ENCODE measurements at regions of chr16 and their contacts with region 1.

Region 1: DNA sequence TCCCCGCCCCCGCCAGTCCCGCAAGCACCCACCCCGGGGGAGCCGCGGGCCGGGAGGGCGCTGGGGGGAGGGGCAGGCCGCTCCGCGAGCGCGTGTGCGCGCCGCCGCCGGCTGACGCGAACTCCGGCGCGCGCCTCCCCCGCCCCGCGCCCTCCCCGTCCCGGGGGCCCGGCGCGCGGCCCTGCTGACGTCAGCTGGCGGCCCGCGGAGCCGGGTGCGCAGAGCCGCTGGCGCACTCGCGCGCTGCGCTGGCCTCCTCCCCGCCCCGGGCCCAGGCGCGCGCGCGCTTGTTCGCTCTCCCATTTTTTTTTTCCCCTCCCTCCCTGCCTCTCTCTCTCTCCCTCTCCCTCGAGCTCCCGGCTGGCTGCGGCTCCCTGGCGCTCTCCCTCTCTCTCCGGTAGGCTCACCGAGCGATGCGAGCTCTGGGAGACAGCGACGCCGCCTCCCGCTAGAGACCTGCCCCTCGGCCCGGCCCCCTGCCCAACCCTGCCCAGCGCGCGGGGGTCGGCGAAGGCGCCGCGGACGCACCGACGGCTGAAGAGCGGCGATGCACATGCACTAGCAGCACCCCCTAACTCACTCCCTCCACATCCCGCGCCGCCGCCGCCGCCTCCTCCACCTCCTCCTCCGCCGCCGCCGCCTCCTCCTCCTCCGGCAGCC is at the start of gene GNAO1:
- DNase-seq: peak; percentile 59
- ATAC-seq: peak; percentile 81
- H3K4me3 Mint-ChIP-seq: peak within 1 kb of the TSS; percentile 83
- H3K27ac Mint-ChIP-seq: no peak within 1 kb of the TSS
- H3K4me1 Mint-ChIP-seq: peaks cover 31% of the 10 kb centered on the region
- H3K27me3 Mint-ChIP-seq: peaks cover 35% of the 10 kb centered on the region
- CTCF ChIP-seq: no peak
- total RNA-seq, gene GNAO1: 0.53 and 0.78 TPM in 2 replicates

Region 2: GRCh38 chr16:54936979-54937670 is 1254.2 kb before region 1 on chr16:
- CTCF ChIA-PET with region 1: no interaction called
- POLR2A ChIA-PET with region 1: no interaction called
- intact Hi-C with region 1: loop called (anchors 5 kb)
- DNase-seq: no peak
- ATAC-seq: no peak
- H3K4me3 Mint-ChIP-seq: peak overlapping the region; percentile 15
- H3K27ac Mint-ChIP-seq: no peak overlapping the region
- H3K4me1 Mint-ChIP-seq: peaks cover 20% of the 10 kb centered on the region
- H3K27me3 Mint-ChIP-seq: peaks cover 74% of the 10 kb centered on the region
- CTCF ChIP-seq: no peak

Region 3: GRCh38 chr16:56121156-56121500 is 70.2 kb before region 1 on chr16:
- CTCF ChIA-PET with region 1: no interaction called
- POLR2A ChIA-PET with region 1: no interaction called
- intact Hi-C with region 1: loop called (anchors 5 kb)
- DNase-seq: no peak
- ATAC-seq: peak; percentile 82
- H3K4me3 Mint-ChIP-seq: no peak overlapping the region
- H3K27ac Mint-ChIP-seq: peak overlapping the region; percentile 19
- H3K4me1 Mint-ChIP-seq: peaks cover 32% of the 10 kb centered on the region
- H3K27me3 Mint-ChIP-seq: peaks cover 10% of the 10 kb centered on the region
- CTCF ChIP-seq: no peak

Region 4: DNA sequence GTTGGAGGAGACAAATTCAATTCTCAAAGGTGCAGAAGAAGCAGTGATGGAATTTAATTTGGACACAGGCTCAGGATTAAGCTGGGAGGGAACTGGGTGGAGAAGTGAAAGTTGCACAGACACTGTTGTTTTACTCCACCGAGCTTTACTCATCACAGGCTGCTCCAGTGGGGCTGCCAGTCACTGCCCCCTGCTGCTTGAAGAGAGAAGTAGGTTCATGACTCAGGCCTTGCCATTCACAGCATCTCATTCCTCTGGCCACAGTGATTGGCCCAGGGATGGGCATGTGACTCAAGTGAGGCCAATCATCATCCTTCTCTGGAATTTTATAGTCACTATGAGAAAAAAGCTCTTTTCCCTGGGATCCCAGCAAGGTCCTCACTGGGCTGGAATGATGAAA is 11.8 kb after region 1 on chr16:
- CTCF ChIA-PET with region 1: interaction called, 7 read pairs
- POLR2A ChIA-PET with region 1: interaction called, 4 read pairs
- intact Hi-C with region 1: loop called (anchors 1 kb)
- DNase-seq: no peak
- ATAC-seq: peak; percentile 92
- H3K4me3 Mint-ChIP-seq: no peak overlapping the region
- H3K27ac Mint-ChIP-seq: no peak overlapping the region
- H3K4me1 Mint-ChIP-seq: peaks cover 25% of the 10 kb centered on the region
- H3K27me3 Mint-ChIP-seq: no peaks in the 10 kb centered on the region
- CTCF ChIP-seq: no peak

Region 5: GRCh38 chr16:56425439-56425832 is 234.2 kb after region 1 on chr16 and contains the start of gene AMFR:
- CTCF ChIA-PET with region 1: no interaction called
- POLR2A ChIA-PET with region 1: no interaction called
- intact Hi-C with region 1: loop called (anchors 10 kb)
- DNase-seq: peak; percentile 82
- ATAC-seq: peak; percentile 87
- H3K4me3 Mint-ChIP-seq: peak within 1 kb of the TSS; percentile 96
- H3K27ac Mint-ChIP-seq: peak within 1 kb of the TSS; percentile 95
- H3K4me1 Mint-ChIP-seq: peaks cover 44% of the 10 kb centered on the region
- H3K27me3 Mint-ChIP-seq: no peaks in the 10 kb centered on the region
- CTCF ChIP-seq: no peak
- total RNA-seq, gene AMFR: 118 and 134 TPM in 2 replicates

Region 6: GRCh38 chr16:57984331-57985203 is 1793.3 kb after region 1 on chr16:
- CTCF ChIA-PET with region 1: no interaction called
- POLR2A ChIA-PET with region 1: no interaction called
- intact Hi-C with region 1: loop called (anchors 5 kb)
- DNase-seq: peak; percentile 82
- ATAC-seq: peak; percentile 99
- H3K4me3 Mint-ChIP-seq: peak overlapping the region; percentile 91
- H3K27ac Mint-ChIP-seq: no peak overlapping the region
- H3K4me1 Mint-ChIP-seq: peaks cover 14% of the 10 kb centered on the region
- H3K27me3 Mint-ChIP-seq: peaks cover 4% of the 10 kb centered on the region
- CTCF ChIP-seq: no peak

Measured in activated B cell treated with CpG ODN at 0.5 μM for 24 hours (primary cell).